Endothelial cell of umbilical vein (primary cell): ENCODE measurements at regions of chr3 and their contacts with region 1.

Region 1: GRCh38 chr3:14651440-14652251 is at the start of gene CCDC174:
- DNase-seq: peak; percentile 99
- H3K4me3 ChIP-seq: peak within 1 kb of the TSS; percentile 17 to 75 (median 61)
- H3K27ac ChIP-seq: peak within 1 kb of the TSS; percentile 40
- H3K4me1 ChIP-seq: peaks cover 16% of the 10 kb centered on the region
- H3K27me3 ChIP-seq: peaks cover 0 to 2% of the 10 kb centered on the region in 2 experiments
- CTCF ChIP-seq: no peak
- POLR2A ChIP-seq: peak; percentile 93
- total RNA-seq, gene CCDC174: 15.1 and 16.6 TPM in 2 replicates

Region 2: DNA sequence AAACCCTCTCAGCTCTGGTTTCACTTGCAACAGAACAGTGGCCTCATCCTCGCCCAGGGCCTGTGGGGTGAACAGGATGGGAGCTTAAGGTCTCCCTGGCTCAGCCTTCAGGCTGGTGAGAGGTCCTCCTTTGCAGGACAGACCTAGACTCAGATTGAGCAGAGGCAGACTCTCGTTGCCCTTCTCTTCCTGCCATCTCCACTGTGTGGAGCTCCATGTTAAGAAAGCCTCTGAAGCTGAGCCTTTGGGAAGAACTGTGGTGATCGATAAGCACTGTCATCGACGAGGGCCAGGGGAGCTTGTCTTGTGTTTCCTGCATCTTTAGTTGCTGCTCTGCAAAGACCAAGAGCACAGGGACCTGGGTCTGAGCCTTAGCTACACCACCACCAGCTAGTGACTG is 73.7 kb before region 1 on chr3:
- CTCF ChIA-PET with region 1: no interaction called
- POLR2A ChIA-PET with region 1: no interaction called
- dilution Hi-C with region 1: no loop called
- intact Hi-C with region 1: no loop called
- DNase-seq: no peak
- H3K4me3 ChIP-seq: no peak overlapping the region
- H3K27ac ChIP-seq: no peak overlapping the region
- H3K4me1 ChIP-seq: no peaks in the 10 kb centered on the region
- H3K27me3 ChIP-seq: no peaks in the 10 kb centered on the region
- CTCF ChIP-seq: no peak
- POLR2A ChIP-seq: no peak

Region 3: DNA sequence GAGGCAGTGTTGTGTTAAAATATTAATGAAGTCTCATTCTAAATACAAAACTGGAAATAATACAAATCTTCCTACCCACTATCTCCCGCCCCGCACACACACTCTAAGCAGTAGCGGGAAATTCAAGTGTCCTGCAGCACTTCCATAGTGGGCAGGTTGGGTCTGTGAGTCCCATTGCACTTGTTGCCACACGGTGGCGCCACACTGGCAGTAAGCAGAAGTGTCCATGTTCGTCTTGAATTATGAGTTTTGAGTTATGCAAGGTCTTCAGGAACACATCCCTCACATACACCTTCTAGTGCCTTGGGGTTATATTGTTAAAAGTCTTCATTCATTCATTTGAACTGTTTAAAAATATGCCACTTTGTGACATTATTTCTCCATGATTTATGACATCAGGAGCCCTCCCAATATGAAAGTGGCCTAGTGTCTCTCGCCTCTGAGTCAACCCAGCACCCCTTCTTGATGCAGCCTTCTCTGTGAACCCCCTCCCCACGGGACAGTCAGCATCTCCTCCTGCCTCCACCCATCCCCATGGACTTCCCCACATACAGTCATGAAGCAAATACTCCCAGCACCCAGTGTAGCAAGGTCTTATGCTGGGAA is 17.7 kb before region 1 on chr3:
- CTCF ChIA-PET with region 1: interaction called, 9 read pairs
- POLR2A ChIA-PET with region 1: no interaction called
- dilution Hi-C with region 1: no loop called
- intact Hi-C with region 1: loop called (anchors 1 kb)
- DNase-seq: peak; percentile 53
- H3K4me3 ChIP-seq: no peak overlapping the region
- H3K27ac ChIP-seq: peak overlapping the region; percentile 54
- H3K4me1 ChIP-seq: peaks cover 15% of the 10 kb centered on the region
- H3K27me3 ChIP-seq: peaks cover 0 to 2% of the 10 kb centered on the region in 2 experiments
- CTCF ChIP-seq: peak; percentile 76 to 83
- POLR2A ChIP-seq: no peak

Region 4: GRCh38 chr3:15399970-15400369 is 748.3 kb after region 1 on chr3:
- CTCF ChIA-PET with region 1: no interaction called
- POLR2A ChIA-PET with region 1: no interaction called
- dilution Hi-C with region 1: no loop called
- intact Hi-C with region 1: no loop called
- DNase-seq: no peak
- H3K4me3 ChIP-seq: no peak overlapping the region
- H3K27ac ChIP-seq: no peak overlapping the region
- H3K4me1 ChIP-seq: no peaks in the 10 kb centered on the region
- H3K27me3 ChIP-seq: no peaks in the 10 kb centered on the region
- CTCF ChIP-seq: no peak
- POLR2A ChIP-seq: no peak